Activated CD4-positive, alpha-beta memory T cell treated with anti-CD3 and anti-CD28 coated beads for 36 hours (primary cell): ENCODE measurements at regions of chr17 and their contacts with region 1.

Region 1: GRCh38 chr17:16521070-16521727 is 29.2 kb upstream of the LRRC75A start:
- DNase-seq: peak; percentile 75
- H3K4me3 Mint-ChIP-seq: no peak overlapping the region
- H3K27ac Mint-ChIP-seq: no peak overlapping the region
- H3K4me1 Mint-ChIP-seq: peaks cover 6% of the 10 kb centered on the region
- H3K27me3 Mint-ChIP-seq: peaks cover 24% of the 10 kb centered on the region

Region 2: DNA sequence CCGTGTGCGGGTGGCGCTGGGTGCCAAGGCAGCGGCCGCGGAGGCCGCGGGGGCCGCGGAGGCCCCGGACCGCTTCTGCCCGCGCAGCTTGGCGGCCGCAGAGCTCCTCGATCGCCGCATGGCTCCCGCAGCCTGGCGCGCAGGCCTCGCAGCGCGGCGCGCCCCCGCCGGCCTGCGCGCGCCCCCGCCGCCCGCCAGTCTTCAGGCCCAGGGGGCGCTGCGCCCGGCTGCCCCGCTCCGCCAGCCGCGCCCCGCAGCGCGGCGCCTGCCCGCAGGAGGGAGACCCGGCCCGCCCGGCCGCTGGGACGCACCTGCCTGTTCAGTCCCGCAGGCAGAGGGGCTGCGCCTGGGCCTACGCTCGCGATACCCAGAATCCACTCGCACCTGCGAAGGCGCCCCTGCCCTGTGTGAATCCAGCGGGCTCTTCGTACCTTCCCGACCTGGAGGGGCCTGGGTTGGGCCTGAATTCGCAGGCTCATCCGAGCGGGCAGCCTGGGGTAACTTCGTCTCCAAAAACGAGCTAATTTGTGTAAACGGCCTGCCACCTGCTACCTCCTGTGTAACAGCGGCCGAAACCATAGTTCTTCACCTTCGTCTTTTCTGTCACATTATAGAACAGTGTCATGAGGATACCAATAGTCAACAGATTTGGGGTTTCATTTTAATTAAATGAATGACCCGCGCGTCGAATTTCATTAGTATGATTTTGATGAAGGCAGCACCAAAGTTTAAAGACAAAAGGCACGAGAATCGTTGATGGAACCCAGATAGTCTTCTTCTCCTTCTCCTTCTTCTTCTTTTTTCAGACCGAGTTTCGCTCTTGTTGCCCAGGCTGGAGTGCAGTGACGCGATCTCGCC is 167.7 kb before region 1 on chr17 and contains the start of gene CENPV:
- CTCF ChIA-PET with region 1: interaction called, 10 read pairs
- POLR2A ChIA-PET with region 1: no interaction called
- intact Hi-C with region 1: no loop called
- DNase-seq: peak; percentile 69
- H3K4me3 Mint-ChIP-seq: peak within 1 kb of the TSS; percentile 87
- H3K27ac Mint-ChIP-seq: peak within 1 kb of the TSS; percentile 28
- H3K4me1 Mint-ChIP-seq: peaks cover 22% of the 10 kb centered on the region
- H3K27me3 Mint-ChIP-seq: no peaks in the 10 kb centered on the region
- total RNA-seq, gene CENPV: 43.0 to 44.2 TPM

Region 3: DNA sequence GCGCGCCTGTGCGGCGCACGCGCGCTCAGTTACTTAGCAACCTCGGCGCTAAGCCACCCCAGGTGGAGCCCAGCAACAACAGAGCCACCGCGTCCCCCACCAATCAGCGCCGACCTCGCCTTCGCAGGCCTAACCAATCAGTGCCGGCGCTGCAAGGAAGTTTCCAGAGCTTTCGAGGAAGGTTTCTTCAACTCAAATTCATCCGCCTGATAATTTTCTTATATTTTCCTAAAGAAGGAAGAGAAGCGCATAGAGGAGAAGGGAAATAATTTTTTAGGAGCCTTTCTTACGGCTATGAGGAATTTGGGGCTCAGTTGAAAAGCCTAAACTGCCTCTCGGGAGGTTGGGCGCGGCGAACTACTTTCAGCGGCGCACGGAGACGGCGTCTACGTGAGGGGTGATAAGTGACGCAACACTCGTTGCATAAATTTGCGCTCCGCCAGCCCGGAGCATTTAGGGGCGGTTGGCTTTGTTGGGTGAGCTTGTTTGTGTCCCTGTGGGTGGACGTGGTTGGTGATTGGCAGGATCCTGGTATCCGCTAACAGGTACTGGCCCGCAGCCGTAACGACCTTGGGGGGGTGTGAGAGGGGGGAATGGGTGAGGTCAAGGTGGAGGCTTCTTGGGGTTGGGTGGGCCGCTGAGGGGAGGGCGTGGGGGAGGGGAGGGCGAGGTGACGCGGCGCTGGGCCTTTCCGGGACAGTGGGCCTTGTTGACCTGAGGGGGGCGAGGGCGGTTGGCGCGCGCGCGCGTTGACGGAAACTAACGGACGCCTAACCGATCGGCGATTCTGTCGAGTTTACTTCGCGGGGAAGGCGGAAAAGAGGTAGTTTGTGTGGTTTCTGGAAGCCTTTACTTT is 140.3 kb before region 1 on chr17 and contains the start of gene UBB:
- CTCF ChIA-PET with region 1: interaction called, 10 read pairs
- POLR2A ChIA-PET with region 1: no interaction called
- intact Hi-C with region 1: loop called (anchors 1 kb)
- DNase-seq: peak; percentile 98
- H3K4me3 Mint-ChIP-seq: peak within 1 kb of the TSS; percentile 93
- H3K27ac Mint-ChIP-seq: peak within 1 kb of the TSS; percentile 99
- H3K4me1 Mint-ChIP-seq: peaks cover 40% of the 10 kb centered on the region
- H3K27me3 Mint-ChIP-seq: no peaks in the 10 kb centered on the region
- total RNA-seq, gene UBB: 1,695 to 1,771 TPM

Region 4: GRCh38 chr17:16486373-16487250 is 34.6 kb before region 1 on chr17:
- CTCF ChIA-PET with region 1: interaction called, 10 read pairs
- POLR2A ChIA-PET with region 1: no interaction called
- intact Hi-C with region 1: no loop called
- DNase-seq: no peak
- H3K4me3 Mint-ChIP-seq: no peak overlapping the region
- H3K27ac Mint-ChIP-seq: no peak overlapping the region
- H3K4me1 Mint-ChIP-seq: peaks cover 9% of the 10 kb centered on the region
- H3K27me3 Mint-ChIP-seq: no peaks in the 10 kb centered on the region

Region 5: DNA sequence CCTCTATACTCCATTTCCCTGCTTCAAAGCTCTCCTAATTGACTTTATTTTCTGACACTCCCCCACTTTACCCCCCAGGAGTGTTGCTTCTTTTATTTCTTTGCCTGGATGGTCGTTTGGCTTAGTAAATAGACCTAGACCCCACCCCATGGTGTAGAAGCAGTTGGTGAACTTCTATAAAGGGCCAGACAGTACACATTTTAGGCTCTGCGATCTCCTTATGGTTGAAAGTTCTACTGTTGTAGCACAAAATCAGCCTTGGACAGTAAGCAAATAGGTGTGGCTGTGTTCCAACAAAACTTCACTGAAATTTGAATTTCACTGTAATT is 15.9 kb after region 1 on chr17:
- CTCF ChIA-PET with region 1: interaction called, 21 read pairs
- POLR2A ChIA-PET with region 1: no interaction called
- intact Hi-C with region 1: no loop called
- DNase-seq: no peak
- H3K4me3 Mint-ChIP-seq: no peak overlapping the region
- H3K27ac Mint-ChIP-seq: no peak overlapping the region
- H3K4me1 Mint-ChIP-seq: peaks cover 14% of the 10 kb centered on the region
- H3K27me3 Mint-ChIP-seq: peaks cover 2% of the 10 kb centered on the region

Region 6: DNA sequence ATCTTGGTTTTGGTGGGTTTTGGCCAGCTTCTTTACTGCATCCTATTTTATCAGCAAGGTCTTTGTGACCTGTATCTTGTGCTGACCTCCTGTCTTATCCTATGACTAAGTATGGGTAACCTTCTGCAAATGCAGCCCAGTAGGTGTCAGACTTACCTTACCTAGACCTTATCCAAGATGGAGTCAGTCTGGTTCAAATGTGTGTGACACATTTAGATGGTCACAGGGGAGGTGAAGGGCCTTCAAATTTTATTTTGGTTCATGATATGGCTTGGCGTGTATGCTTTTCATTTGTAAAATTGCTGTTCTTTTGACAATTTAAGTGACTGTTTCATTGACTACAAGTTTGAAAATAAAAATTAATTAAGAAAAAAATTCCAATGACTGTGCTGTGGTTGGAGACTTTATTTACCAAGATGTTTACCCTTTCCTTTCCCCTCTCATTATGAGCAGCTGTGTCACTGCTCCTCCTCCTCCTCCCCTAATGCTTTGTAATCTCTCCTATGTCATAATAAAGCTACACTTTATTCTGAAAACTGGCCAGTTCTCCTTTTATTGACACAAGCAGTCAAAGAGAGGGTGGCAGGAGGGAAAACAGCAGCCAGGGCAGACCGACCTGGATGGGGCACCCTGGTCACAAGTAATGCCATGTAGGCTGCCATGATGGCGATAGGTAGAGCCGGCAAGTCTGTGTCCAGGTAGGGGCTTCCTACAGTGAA is 401.3 kb after region 1 on chr17:
- CTCF ChIA-PET with region 1: no interaction called
- POLR2A ChIA-PET with region 1: no interaction called
- intact Hi-C with region 1: no loop called
- DNase-seq: peak; percentile 7
- H3K4me3 Mint-ChIP-seq: no peak overlapping the region
- H3K27ac Mint-ChIP-seq: no peak overlapping the region
- H3K4me1 Mint-ChIP-seq: no peaks in the 10 kb centered on the region
- H3K27me3 Mint-ChIP-seq: no peaks in the 10 kb centered on the region